AG04450 (cell line): ENCODE measurements at regions of chr5 and their contacts with region 1.

Region 1: GRCh38 chr5:42767491-42768105 is 11.0 kb downstream of the CCDC152 start:
- DNase-seq: no peak
- H3K4me3 ChIP-seq: no peak overlapping the region
- H3K27ac ChIP-seq: no peak overlapping the region
- H3K27me3 ChIP-seq: no peaks in the 10 kb centered on the region
- CTCF ChIP-seq: peak; percentile 51

Region 2: DNA sequence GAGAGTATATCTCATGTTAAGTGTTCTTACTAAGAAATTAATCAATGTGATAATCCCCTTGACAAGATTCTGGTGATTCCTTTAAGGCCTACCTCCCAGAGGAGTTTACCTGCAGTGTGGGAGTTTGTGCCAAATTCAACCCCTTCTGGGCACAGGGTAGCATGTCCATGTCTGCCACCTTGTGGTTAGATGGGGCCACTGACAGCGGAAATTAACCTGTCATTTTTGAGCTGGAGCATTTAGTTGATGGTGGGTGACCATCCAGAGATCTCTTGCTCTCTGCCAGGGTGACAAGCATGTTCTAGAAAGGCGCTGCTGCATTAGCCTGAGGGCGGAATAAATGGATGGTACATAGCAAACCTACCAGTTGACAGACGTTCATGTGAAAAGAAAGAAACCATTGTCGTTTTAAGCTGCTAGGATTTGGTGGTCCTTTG is 710.3 kb before region 1 on chr5:
- CTCF ChIA-PET with region 1: interaction called, 10 read pairs
- POLR2A ChIA-PET with region 1: no interaction called
- DNase-seq: peak; percentile 0
- H3K4me3 ChIP-seq: no peak overlapping the region
- H3K27ac ChIP-seq: no peak overlapping the region
- H3K27me3 ChIP-seq: no peaks in the 10 kb centered on the region
- CTCF ChIP-seq: peak; percentile 71

Region 3: GRCh38 chr5:42423285-42424165 is 344.1 kb before region 1 on chr5 and contains the start of gene GHR:
- CTCF ChIA-PET with region 1: interaction called, 14 read pairs
- POLR2A ChIA-PET with region 1: no interaction called
- DNase-seq: peak; percentile 72
- H3K4me3 ChIP-seq: peak within 1 kb of the TSS; percentile 69
- H3K27ac ChIP-seq: no peak within 1 kb of the TSS
- H3K27me3 ChIP-seq: peaks cover 11% of the 10 kb centered on the region
- CTCF ChIP-seq: peak; percentile 78
- polyA plus RNA-seq, gene GHR: 0.48 and 0.63 TPM in 2 replicates

Region 4: GRCh38 chr5:42573386-42573785 is 194.2 kb before region 1 on chr5:
- CTCF ChIA-PET with region 1: no interaction called
- POLR2A ChIA-PET with region 1: no interaction called
- DNase-seq: no peak
- H3K4me3 ChIP-seq: no peak overlapping the region
- H3K27ac ChIP-seq: no peak overlapping the region
- H3K27me3 ChIP-seq: no peaks in the 10 kb centered on the region
- CTCF ChIP-seq: no peak

Region 5: DNA sequence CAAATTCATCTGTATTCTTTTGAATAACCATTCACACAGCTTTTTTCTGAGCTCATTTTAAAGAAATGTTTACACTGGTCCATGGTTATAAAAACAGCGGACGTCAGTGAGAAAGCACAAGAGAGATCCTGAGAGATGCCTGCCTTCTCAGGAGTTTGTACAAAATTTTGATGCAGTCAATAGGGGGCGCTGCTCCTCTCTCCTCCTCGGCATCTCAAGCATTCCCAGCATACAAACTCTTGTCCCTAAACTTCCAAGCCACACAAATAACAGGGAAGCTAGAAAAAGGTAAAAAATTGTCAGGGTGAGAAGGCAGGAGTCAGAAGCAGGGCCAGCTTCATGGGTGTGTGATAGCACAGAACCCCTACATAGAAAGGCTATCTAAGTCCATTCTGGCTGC is 22.2 kb before region 1 on chr5:
- CTCF ChIA-PET with region 1: interaction called, 10 read pairs
- POLR2A ChIA-PET with region 1: no interaction called
- DNase-seq: no peak
- H3K4me3 ChIP-seq: no peak overlapping the region
- H3K27ac ChIP-seq: no peak overlapping the region
- H3K27me3 ChIP-seq: no peaks in the 10 kb centered on the region
- CTCF ChIP-seq: peak; percentile 40